ENCODE measurements at regions of chr13 and their contacts with region 1.

Region 1: DNA sequence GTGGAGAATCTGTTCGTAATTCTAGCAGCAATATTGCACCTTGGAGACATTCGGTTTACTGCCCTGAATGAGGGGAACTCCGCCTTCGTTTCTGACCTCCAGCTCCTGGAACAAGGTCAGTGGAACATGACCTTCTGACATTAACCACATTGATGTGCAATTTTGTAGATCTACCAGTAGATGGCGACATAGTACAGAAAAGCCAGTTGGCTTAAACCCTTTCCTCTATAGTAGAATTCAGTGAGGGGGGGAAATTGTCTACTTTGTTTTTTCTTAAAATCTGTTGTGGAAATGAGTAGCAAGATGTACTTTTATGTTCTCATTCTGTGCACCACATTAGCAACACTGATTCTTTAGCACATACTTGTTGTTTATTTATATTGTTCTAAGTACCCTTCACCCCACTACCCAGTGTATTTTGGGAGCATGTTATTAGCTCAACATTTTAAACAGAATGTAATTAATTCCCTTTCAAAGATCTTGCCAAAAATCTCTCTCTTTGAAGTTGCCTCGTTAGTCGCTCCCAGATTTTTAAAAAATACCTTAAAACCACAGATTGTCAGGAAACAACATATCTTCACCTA is 332.2 kb downstream of the MYO16 start:
- DNase-seq: no peak
- H3K4me3 ChIP-seq: no peak overlapping the region
- CTCF ChIP-seq: peak; percentile 51

Region 2: GRCh38 chr13:108915634-108916512 is 45.8 kb before region 1 on chr13:
- CTCF ChIA-PET with region 1: interaction called, 18 read pairs
- POLR2A ChIA-PET with region 1: interaction called, 3 read pairs
- DNase-seq: no peak
- H3K4me3 ChIP-seq: no peak overlapping the region
- CTCF ChIP-seq: no peak

Region 3: GRCh38 chr13:108950333-108951010 is 11.2 kb before region 1 on chr13:
- CTCF ChIA-PET with region 1: interaction called, 10 read pairs
- POLR2A ChIA-PET with region 1: no interaction called
- DNase-seq: no peak
- H3K4me3 ChIP-seq: no peak overlapping the region
- CTCF ChIP-seq: no peak

Region 4: DNA sequence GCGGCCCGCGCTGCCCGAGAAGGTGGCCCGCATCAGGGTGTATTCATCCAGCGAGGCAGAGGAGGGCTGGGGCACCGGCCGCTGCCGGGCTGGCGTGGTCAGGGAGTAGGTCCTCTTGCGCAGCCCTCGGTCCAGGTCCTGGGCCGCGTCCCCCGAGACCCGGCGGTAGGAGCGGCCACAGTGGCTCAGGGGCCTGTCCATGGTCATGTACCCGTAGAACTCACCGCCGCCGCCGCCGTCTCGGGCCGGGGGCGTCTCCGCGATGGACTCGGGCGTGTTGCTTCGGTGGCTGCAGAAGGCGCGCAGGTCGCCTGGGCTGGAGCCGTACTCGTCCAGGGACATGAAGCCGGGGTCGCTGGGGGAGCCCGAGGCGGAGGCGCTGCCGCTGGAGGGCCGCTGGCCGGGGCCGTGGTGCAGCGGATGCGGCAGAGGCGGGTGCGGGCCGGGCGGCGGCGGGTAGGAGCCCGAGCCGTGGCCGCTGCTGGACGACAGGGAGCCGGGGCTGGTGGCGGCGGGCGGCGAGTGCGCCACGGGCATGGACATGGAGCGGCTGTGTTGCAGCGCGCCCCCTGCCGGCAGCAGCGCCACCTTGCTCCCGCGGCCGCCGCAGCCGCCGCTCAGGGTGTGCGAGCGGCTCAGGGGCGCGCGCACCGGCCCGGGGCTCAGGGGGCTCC is 822.7 kb after region 1 on chr13:
- CTCF ChIA-PET with region 1: interaction called, 18 read pairs
- POLR2A ChIA-PET with region 1: no interaction called
- DNase-seq: no peak
- H3K4me3 ChIP-seq: peak overlapping the region; percentile 64
- CTCF ChIP-seq: peak; percentile 74

Region 5: GRCh38 chr13:109790951-109791605 is 829.4 kb after region 1 on chr13:
- CTCF ChIA-PET with region 1: interaction called, 18 read pairs
- POLR2A ChIA-PET with region 1: no interaction called
- DNase-seq: no peak
- H3K4me3 ChIP-seq: no peak overlapping the region
- CTCF ChIP-seq: peak; percentile 42

Measured in AG04449 (cell line).